ENCODE measurements at regions of chr13 and their contacts with region 1.

Region 1: DNA sequence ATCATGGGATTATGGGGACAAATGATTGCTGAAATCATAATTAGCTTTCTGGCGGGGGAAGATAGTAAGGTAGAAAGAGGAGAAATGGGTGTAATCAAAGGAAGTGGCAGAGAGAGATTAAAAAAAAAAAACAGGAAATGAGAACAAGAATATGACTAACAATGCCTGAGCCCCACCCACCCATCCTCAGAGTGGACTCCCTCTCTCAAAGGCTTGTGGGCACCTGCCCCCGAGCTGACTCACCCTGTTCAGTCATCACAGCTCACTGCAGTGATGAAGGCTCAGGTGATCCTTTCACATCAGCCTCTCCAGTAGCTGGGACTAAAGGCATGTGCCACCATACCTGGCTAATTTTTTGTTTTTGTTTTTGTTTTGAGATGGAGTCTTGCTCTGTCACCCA is 26.4 kb upstream of the TPT1 start:
- DNase-seq: peak; percentile 48 to 80 (median 60)
- ATAC-seq: peak; percentile 69
- H3K4me3 ChIP-seq: no peak overlapping the region
- H3K27ac ChIP-seq: no peak overlapping the region
- H3K4me1 ChIP-seq: peaks cover 9 to 13% of the 10 kb centered on the region in 2 experiments; a peak in 4 of 5 replicates
- H3K27me3 ChIP-seq: no peaks in the 10 kb centered on the region
- CTCF ChIP-seq: no peak
- EP300 ChIP-seq: no peak; the same call in 1 of the 2 replicates
- POLR2A ChIP-seq: no peak
- RAD21 ChIP-seq: no peak

Region 2: DNA sequence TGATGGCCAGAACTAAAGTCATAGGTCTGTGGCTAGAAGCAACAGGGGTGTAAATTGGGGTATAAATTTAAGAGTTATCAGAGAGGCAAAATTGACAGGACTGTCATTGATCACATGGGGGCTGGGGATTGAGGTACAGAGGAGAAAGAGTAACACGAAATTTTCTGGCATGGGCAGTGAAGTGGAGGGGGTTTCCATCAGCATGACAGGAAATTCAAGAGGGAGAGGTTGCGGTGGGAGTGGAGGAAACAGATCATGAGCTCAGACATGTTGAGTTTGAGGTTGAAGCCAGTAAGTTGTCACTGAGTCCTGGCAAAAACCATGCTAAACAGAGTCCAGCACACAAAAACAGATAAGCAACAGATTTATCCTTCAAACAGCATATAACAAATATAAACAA is 599.1 kb before region 1 on chr13:
- CTCF ChIA-PET with region 1: no interaction called
- POLR2A ChIA-PET with region 1: no interaction called
- in situ Hi-C with region 1: no loop called
- intact Hi-C with region 1: no loop called
- DNase-seq: no peak
- ATAC-seq: no peak
- H3K4me3 ChIP-seq: no peak overlapping the region
- H3K27ac ChIP-seq: no peak overlapping the region
- H3K4me1 ChIP-seq: no peaks in the 10 kb centered on the region
- H3K27me3 ChIP-seq: no peaks in the 10 kb centered on the region; a peak in 1 of 5 replicates
- CTCF ChIP-seq: no peak
- EP300 ChIP-seq: no peak
- POLR2A ChIP-seq: no peak
- RAD21 ChIP-seq: no peak

Region 3: GRCh38 chr13:45292176-45292575 is 75.2 kb before region 1 on chr13:
- CTCF ChIA-PET with region 1: no interaction called
- POLR2A ChIA-PET with region 1: no interaction called
- in situ Hi-C with region 1: no loop called
- intact Hi-C with region 1: no loop called
- DNase-seq: no peak
- ATAC-seq: no peak
- H3K4me3 ChIP-seq: no peak overlapping the region
- H3K27ac ChIP-seq: no peak overlapping the region
- H3K4me1 ChIP-seq: no peaks in the 10 kb centered on the region; a peak in 2 of 5 replicates
- H3K27me3 ChIP-seq: no peaks in the 10 kb centered on the region
- CTCF ChIP-seq: no peak
- EP300 ChIP-seq: no peak
- POLR2A ChIP-seq: no peak
- RAD21 ChIP-seq: no peak

Region 4: GRCh38 chr13:45320876-45321629 is 46.3 kb before region 1 on chr13:
- CTCF ChIA-PET with region 1: no interaction called
- POLR2A ChIA-PET with region 1: no interaction called
- in situ Hi-C with region 1: no loop called
- intact Hi-C with region 1: no loop called
- DNase-seq: no peak
- ATAC-seq: peak; percentile 13; the same call in 1 of the 3 replicates
- H3K4me3 ChIP-seq: no peak overlapping the region
- H3K27ac ChIP-seq: no peak overlapping the region
- H3K4me1 ChIP-seq: peaks cover 6 to 13% of the 10 kb centered on the region in 2 experiments; a peak in 3 of 5 replicates
- H3K27me3 ChIP-seq: no peaks in the 10 kb centered on the region
- CTCF ChIP-seq: no peak
- EP300 ChIP-seq: no peak
- POLR2A ChIP-seq: no peak
- RAD21 ChIP-seq: no peak

Region 5: GRCh38 chr13:45340926-45341750 is 26.2 kb before region 1 on chr13 and contains the start of gene TPT1:
- CTCF ChIA-PET with region 1: no interaction called
- POLR2A ChIA-PET with region 1: interaction called, 15 read pairs
- in situ Hi-C with region 1: no loop called
- intact Hi-C with region 1: no loop called
- DNase-seq: peak; percentile 94 to 97 (median 96)
- ATAC-seq: peak; percentile 96
- H3K4me3 ChIP-seq: peak within 1 kb of the TSS; percentile 96
- H3K27ac ChIP-seq: peak within 1 kb of the TSS; percentile 99
- H3K4me1 ChIP-seq: peaks cover 5 to 8% of the 10 kb centered on the region in 2 experiments; a peak in 4 of 5 replicates
- H3K27me3 ChIP-seq: no peaks in the 10 kb centered on the region
- CTCF ChIP-seq: no peak
- EP300 ChIP-seq: no peak; the same call in 1 of the 2 replicates
- POLR2A ChIP-seq: peak; percentile 90
- RAD21 ChIP-seq: no peak
- polyA plus RNA-seq, gene TPT1: 602 to 615 TPM

Region 6: DNA sequence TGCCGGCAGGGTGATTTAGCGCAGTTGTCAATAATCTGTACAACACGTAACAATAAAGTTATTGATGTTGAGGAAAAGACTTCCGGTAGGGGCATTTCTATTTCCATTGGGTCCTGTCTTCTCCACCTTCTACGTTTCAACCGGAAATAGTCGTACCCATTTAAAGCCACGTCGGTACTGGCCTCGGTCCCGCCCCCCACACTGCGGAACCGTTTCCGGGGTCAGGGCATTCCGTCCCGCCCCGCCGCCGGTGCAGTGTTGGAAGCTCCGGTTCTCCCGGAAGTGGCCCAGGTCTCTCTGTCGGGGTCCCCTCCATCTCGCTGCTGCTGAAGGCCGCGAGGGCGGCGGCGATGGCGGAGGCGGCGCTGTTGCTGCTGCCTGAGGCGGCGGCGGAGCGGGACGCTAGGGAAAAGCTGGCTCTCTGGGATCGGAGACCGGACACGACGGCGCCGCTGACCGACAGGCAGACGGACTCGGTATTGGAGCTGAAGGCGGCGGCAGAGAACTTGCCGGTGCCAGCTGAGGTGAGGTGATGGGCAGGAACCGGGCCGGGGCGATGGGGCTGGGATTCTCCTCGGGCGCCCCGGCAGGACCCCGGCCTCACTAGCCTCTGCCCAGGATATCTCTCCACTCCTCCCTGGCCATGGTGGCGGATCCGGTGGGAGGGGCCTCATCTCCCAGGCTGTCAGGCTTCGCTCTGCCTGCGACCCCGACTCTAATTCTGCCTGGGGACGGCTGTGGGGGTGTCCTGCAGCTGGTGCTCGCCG is 97.5 kb after region 1 on chr13 and contains the start of gene COG3:
- CTCF ChIA-PET with region 1: no interaction called
- POLR2A ChIA-PET with region 1: no interaction called
- in situ Hi-C with region 1: no loop called
- intact Hi-C with region 1: loop called (anchors 10 kb)
- DNase-seq: peak; percentile 71 to 93 (median 82)
- ATAC-seq: peak; percentile 98
- H3K4me3 ChIP-seq: peak within 1 kb of the TSS; percentile 93
- H3K27ac ChIP-seq: peak within 1 kb of the TSS; percentile 87
- H3K4me1 ChIP-seq: peaks cover 0 to 9% of the 10 kb centered on the region in 2 experiments; a peak in 3 of 5 replicates
- H3K27me3 ChIP-seq: no peaks in the 10 kb centered on the region
- CTCF ChIP-seq: peak; percentile 3 to 53 (median 8); a peak in 3 of 6 replicates
- EP300 ChIP-seq: peak; percentile 62; the same call in 1 of the 2 replicates
- POLR2A ChIP-seq: peak; percentile 86
- RAD21 ChIP-seq: 0 out of 4 replicates have a peak, but pooled peaks of 1 of the 2 experiments have one; percentile 15
- polyA plus RNA-seq, gene COG3: 3.9 to 4.3 TPM

Region 7: DNA sequence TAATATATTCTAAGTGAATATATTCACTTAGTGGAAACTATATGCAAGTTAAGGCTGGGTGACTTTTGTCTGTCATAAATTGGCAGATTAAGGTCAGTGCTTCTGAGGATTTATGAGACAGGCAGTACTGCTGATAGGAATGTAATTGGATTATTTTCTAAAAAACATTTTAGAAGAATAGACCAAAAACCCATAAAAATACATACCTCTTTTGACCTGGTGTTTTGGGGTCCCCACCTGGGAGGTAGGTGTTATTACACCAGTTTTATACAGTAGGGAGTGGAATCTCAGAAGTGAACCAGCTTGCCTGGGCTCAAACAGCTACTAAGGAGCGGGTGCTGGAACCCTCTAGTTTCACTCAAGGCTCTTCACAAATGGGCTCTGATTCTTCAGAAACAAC is 122.7 kb after region 1 on chr13:
- CTCF ChIA-PET with region 1: interaction called, 8 read pairs
- POLR2A ChIA-PET with region 1: interaction called, 5 read pairs
- in situ Hi-C with region 1: no loop called
- intact Hi-C with region 1: loop called (anchors 2 kb)
- DNase-seq: peak in 2 of 4 experiments; percentile 7 to 18
- ATAC-seq: peak; percentile 74
- H3K4me3 ChIP-seq: no peak overlapping the region
- H3K27ac ChIP-seq: no peak overlapping the region
- H3K4me1 ChIP-seq: no peaks in the 10 kb centered on the region
- H3K27me3 ChIP-seq: no peaks in the 10 kb centered on the region
- CTCF ChIP-seq: peak; percentile 35 to 44 (median 37); a peak in 3 of 6 replicates
- EP300 ChIP-seq: no peak
- POLR2A ChIP-seq: no peak
- RAD21 ChIP-seq: no peak

Region 8: GRCh38 chr13:45718063-45718462 is 350.7 kb after region 1 on chr13:
- CTCF ChIA-PET with region 1: interaction called, 3 read pairs
- POLR2A ChIA-PET with region 1: no interaction called
- in situ Hi-C with region 1: loop called (anchors 25 kb)
- intact Hi-C with region 1: loop called (anchors 5 kb)
- DNase-seq: peak; percentile 8 to 21 (median 15)
- ATAC-seq: peak; percentile 72
- H3K4me3 ChIP-seq: no peak overlapping the region
- H3K27ac ChIP-seq: no peak overlapping the region
- H3K4me1 ChIP-seq: 0 out of 5 replicates have a peak, but pooled peaks cover 0 to 5% of the 10 kb centered on the region in 2 experiments
- H3K27me3 ChIP-seq: peaks cover 0 to 15% of the 10 kb centered on the region in 2 experiments; a peak in 3 of 5 replicates
- CTCF ChIP-seq: peak; percentile 53 to 62 (median 54)
- EP300 ChIP-seq: no peak
- POLR2A ChIP-seq: no peak
- RAD21 ChIP-seq: peak; percentile 34 to 64; a peak in 3 of 4 replicates